Stomach (tissue), 19 donors: ENCODE measurements at regions of chr3 and their contacts with region 1.

Region 1: DNA sequence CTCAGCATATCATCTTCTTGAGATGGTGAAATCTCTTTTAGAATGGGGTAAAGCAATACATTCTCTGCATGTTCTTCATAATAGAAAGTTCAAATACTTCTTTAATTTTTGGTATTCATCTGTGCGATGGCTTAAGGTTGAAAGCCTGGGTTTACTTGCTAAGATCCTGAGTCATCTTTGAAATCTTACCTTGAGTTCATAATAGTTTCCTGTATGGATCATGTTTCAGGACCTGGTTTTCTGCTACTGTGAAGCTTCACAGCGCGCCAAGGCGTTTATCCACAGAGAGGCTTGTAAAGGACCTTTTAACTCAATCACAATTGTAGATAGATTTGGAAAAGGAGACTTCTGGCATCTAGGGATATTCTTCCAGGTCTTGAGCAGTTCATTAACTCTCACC is 39.0 kb downstream of the MED12L start:
- DNase-seq: no peak
- H3K4me3 ChIP-seq: no peak overlapping the region
- H3K27ac ChIP-seq: no peak overlapping the region
- H3K4me1 ChIP-seq: no peaks in the 10 kb centered on the region
- H3K27me3 ChIP-seq: no peaks in the 10 kb centered on the region
- CTCF ChIP-seq: no peak
- EP300 ChIP-seq: no peak
- POLR2A ChIP-seq: no peak

Region 2: DNA sequence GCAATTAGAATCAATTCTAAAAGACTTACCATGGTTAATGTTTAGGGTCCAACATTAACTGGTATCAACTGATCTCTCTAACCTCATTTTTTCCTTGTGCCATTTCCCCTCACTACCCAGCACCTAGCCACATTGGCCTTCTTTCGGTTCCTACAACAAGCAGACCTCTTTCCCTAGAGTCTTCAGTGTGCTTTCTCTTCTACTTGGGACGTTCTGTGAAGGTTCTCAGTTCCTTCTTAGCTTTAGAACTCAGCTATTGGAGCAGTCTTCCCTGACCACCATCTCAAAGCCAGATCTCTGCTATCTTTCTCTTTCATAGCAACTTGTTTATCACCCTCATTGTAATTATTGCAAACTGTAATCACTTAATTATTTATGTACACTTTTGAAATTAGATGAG is 187.8 kb before region 1 on chr3:
- intact Hi-C with region 1: loop called (anchors 10 kb)
- DNase-seq: no peak
- H3K4me3 ChIP-seq: no peak overlapping the region
- H3K27ac ChIP-seq: no peak overlapping the region
- H3K4me1 ChIP-seq: no peaks in the 10 kb centered on the region
- H3K27me3 ChIP-seq: no peaks in the 10 kb centered on the region
- CTCF ChIP-seq: no peak
- EP300 ChIP-seq: no peak
- POLR2A ChIP-seq: no peak

Region 3: GRCh38 chr3:150960708-150961684 is 163.5 kb before region 1 on chr3:
- intact Hi-C with region 1: no loop called
- DNase-seq: no peak
- H3K4me3 ChIP-seq: no peak overlapping the region
- H3K27ac ChIP-seq: no peak overlapping the region
- H3K4me1 ChIP-seq: no peaks in the 10 kb centered on the region
- H3K27me3 ChIP-seq: no peaks in the 10 kb centered on the region
- CTCF ChIP-seq: no peak
- EP300 ChIP-seq: no peak
- POLR2A ChIP-seq: no peak